Naive thymus-derived CD8-positive, alpha-beta T cell (primary cell): ENCODE measurements at regions of chr17 and their contacts with region 1.

Region 1: GRCh38 chr17:56592487-56593085 is 913 bp upstream of the NOG start:
- DNase-seq: peak; percentile 53 to 85 (median 80)
- ATAC-seq: peak; percentile 47 to 61
- H3K4me3 Mint-ChIP-seq: peak overlapping the region; percentile 79 to 98 (median 90)
- H3K27ac Mint-ChIP-seq: peak overlapping the region in 9 of 10 donors; percentile 48 to 93 (median 84)
- H3K4me1 Mint-ChIP-seq: peaks cover 9 to 25% (median 20%) of the 10 kb centered on the region in 4 donors
- H3K27me3 Mint-ChIP-seq: peaks cover 0 to 23% (median 8%) of the 10 kb centered on the region in 5 donors

Region 2: GRCh38 chr17:56351675-56352074 is 240.9 kb before region 1 on chr17:
- POLR2A ChIA-PET with region 1: no interaction called
- DNase-seq: no peak
- ATAC-seq: no peak
- H3K4me3 Mint-ChIP-seq: no peak overlapping the region
- H3K27ac Mint-ChIP-seq: no peak overlapping the region
- H3K4me1 Mint-ChIP-seq: no peaks in the 10 kb centered on the region
- H3K27me3 Mint-ChIP-seq: peaks cover 2 to 14% (median 9%) of the 10 kb centered on the region in 5 donors

Region 3: DNA sequence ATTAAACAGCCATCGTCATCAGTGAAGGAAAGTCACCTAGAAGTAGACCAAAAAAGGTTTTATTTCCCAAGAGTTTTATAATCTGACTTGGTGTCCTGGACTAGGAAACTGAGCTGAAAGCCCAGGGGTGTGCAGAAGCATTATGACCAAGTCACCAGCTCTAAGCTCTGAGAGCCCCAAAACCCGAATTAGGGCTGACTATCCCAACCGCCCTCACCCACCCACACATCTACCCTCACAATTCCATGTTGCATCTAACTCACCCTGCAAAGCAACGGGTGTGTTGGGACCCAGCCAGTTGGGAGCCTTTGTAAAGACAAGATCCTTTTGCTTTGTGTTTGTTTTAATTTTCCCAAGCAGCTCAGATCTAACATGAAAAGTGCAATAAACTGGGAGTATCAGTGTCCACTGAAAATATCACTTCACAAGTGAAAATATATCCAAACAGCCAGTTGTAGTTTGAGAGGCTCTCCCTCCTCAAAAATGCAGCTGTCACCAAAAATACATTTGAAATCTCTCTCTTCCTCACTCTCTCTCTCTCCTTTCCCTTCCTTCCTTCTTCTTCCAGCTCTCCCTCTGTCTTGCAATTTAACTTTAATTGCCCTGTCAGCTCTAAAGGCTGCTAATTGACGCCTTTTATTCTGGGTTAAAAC is 15.3 kb before region 1 on chr17:
- POLR2A ChIA-PET with region 1: no interaction called
- DNase-seq: no peak
- ATAC-seq: no peak
- H3K4me3 Mint-ChIP-seq: no peak overlapping the region
- H3K27ac Mint-ChIP-seq: no peak overlapping the region
- H3K4me1 Mint-ChIP-seq: no peaks in the 10 kb centered on the region
- H3K27me3 Mint-ChIP-seq: peaks cover 10 to 29% (median 19%) of the 10 kb centered on the region in 5 donors

Region 4: GRCh38 chr17:56629531-56630075 is 37.0 kb after region 1 on chr17:
- POLR2A ChIA-PET with region 1: interaction called, 266 read pairs
- DNase-seq: peak in 7 of 10 donors; percentile 10 to 72 (median 24)
- ATAC-seq: peak; percentile 89 to 100
- H3K4me3 Mint-ChIP-seq: no peak overlapping the region
- H3K27ac Mint-ChIP-seq: peak overlapping the region in 6 of 10 donors; percentile 4 to 85 (median 27)
- H3K4me1 Mint-ChIP-seq: peaks cover 5 to 16% (median 11%) of the 10 kb centered on the region in 4 donors
- H3K27me3 Mint-ChIP-seq: peaks cover 0 to 2% (median 0%) of the 10 kb centered on the region in 5 donors

Region 5: DNA sequence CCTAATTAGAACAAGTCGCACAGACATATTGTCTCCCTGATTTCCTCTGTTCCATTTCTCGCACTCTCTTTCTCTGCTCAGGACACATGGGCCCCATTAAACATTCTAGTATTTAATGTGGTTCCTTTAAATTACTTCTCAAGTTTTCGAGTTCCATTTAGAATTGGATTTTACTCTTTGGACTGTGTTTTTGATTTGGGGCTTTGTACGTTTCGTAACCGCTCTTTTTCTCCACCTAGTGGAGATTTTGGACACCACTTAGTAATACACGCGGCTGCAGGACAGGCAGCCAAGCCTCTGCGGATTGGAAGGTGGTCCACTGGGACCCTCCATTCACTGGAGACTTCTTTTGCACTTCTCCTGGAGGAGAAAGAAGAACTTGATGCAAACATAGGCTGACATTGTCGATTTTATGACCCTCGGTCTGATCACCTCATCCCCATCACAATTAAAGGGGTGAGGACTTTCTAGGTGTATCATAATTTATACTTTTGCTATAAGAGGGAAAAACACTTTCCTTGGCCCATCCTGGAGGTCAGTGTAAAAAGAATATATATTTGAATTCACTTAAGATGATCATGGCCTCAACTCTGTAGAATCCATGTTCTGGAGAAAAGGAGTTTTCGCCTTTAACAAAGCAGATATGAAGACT is 86.7 kb after region 1 on chr17:
- POLR2A ChIA-PET with region 1: interaction called, 12 read pairs
- DNase-seq: peak in 4 of 10 donors; percentile 12 to 39 (median 37)
- ATAC-seq: peak; percentile 65 to 77
- H3K4me3 Mint-ChIP-seq: peak overlapping the region; percentile 75 to 91 (median 86)
- H3K27ac Mint-ChIP-seq: peak overlapping the region in 3 of 10 donors; percentile 17 to 65 (median 48)
- H3K4me1 Mint-ChIP-seq: peaks cover 12 to 32% (median 18%) of the 10 kb centered on the region in 4 donors
- H3K27me3 Mint-ChIP-seq: peaks cover 23 to 43% (median 37%) of the 10 kb centered on the region in 5 donors

Region 6: DNA sequence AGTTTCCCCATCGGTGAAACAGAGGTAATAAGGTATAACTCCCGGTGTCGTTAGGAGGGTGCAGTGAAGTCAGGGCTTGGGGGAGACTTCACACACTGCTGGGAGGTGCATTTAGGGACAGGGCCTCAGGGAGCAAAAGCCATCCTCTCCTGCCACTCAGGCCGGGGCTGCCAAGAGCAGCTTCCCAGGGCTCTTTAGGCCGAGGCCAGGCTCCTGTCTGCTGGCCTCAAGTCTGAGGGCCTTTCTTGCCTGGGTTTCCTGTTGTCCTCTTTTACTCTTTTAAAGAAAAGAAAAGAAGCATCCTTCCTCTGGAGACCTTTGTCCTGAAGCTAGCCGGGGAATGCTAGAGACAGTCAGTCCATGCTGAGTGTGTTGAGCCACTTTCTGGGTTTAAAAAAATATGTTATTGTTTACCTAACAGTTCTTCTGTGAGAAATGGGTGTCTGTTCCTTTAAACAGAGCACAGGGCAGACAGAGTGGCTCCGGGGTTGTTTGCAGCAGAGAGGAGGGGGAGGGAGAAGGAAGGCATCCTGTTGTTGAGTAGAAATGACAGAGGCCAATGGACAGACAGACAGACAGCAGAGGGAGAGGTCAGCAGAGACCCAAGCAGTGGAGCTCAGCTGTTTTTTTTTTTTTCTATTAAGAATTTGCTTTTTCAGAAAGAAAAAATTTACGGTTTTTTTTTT is 162.1 kb after region 1 on chr17:
- POLR2A ChIA-PET with region 1: interaction called, 12 read pairs
- DNase-seq: peak in 1 of 10 donors; percentile 11
- ATAC-seq: peak; percentile 57 to 66
- H3K4me3 Mint-ChIP-seq: peak overlapping the region in 8 of 10 donors; percentile 6 to 46 (median 28)
- H3K27ac Mint-ChIP-seq: peak overlapping the region in 7 of 10 donors; percentile 9 to 89 (median 71)
- H3K4me1 Mint-ChIP-seq: peaks cover 16 to 39% (median 25%) of the 10 kb centered on the region in 4 donors
- H3K27me3 Mint-ChIP-seq: no peaks in the 10 kb centered on the region

Region 7: DNA sequence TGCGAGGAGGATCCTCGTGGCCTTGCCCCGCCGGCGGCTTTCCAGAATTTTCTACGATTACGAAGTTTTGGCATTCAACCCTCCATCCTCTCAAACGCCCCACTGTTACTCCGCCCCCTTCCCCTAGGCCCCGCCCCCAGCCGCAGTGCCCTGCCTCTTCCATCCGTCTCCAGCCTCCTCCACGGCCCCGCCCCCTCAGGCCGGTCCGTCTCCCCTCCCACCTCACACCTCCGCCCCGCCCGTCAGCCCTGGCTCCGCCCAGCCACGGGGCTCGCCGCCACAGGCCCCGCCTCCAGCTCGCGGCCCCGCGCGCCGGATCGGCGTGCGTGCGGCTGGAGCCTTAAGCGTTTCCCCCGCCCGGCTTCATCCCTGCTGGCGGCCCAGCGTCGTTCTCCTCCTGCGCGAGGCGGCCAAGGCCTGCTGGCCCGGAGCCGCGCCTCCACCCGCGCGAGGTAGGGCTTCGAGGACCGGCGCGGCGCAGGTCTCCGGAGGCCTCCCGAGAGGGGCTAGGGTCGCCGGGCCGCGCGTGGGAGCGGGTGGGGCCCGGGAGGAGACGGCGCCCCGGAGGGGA is 241.3 kb after region 1 on chr17 and contains the starts of genes C17orf67 and DGKE:
- POLR2A ChIA-PET with region 1: interaction called, 18 read pairs
- DNase-seq: peak; percentile 95 to 100 (median 98)
- ATAC-seq: peak; percentile 78 to 83
- H3K4me3 Mint-ChIP-seq: peak within 1 kb of the TSS; percentile 89 to 98 (median 96)
- H3K27ac Mint-ChIP-seq: peak within 1 kb of the TSS; percentile 79 to 97 (median 94)
- H3K4me1 Mint-ChIP-seq: peaks cover 31 to 72% (median 70%) of the 10 kb centered on the region in 4 donors
- H3K27me3 Mint-ChIP-seq: no peaks in the 10 kb centered on the region
- polyA plus RNA-seq, gene C17orf67: 1.5 to 2.2 (median 1.6) TPM
- polyA plus RNA-seq, gene DGKE: 3.8 to 4.7 (median 4.1) TPM